ENCODE measurements at regions of chr15 and their contacts with region 1.

Region 1: GRCh38 chr15:75517233-75517632 is 61.9 kb downstream of the PTPN9 start:
- DNase-seq: no peak
- ATAC-seq: no peak
- H3K4me3 ChIP-seq: no peak overlapping the region
- H3K27ac ChIP-seq: no peak overlapping the region
- H3K4me1 ChIP-seq: no peaks in the 10 kb centered on the region
- H3K27me3 ChIP-seq: no peaks in the 10 kb centered on the region
- CTCF ChIP-seq: no peak

Region 2: GRCh38 chr15:75606711-75607699 is 89.8 kb after region 1 on chr15:
- intact Hi-C with region 1: loop called in 2 of 10 experiments (anchors 10 kb)
- DNase-seq: no peak
- ATAC-seq: no peak
- H3K4me3 ChIP-seq: no peak overlapping the region
- H3K27ac ChIP-seq: peak overlapping the region in 1 of 10 donors; percentile 42
- H3K4me1 ChIP-seq: peaks cover 0 to 16% (median 0%) of the 10 kb centered on the region in 9 donors
- H3K27me3 ChIP-seq: no peaks in the 10 kb centered on the region
- CTCF ChIP-seq: no peak

Region 3: GRCh38 chr15:75672646-75673425 is 155.6 kb after region 1 on chr15:
- intact Hi-C with region 1: loop called in 1 of 10 experiments (anchors 10 kb)
- DNase-seq: peak in 1 of 2 donors; percentile 50
- ATAC-seq: peak; percentile 7 to 53 (median 28)
- H3K4me3 ChIP-seq: peak overlapping the region in 1 of 10 donors; percentile 18
- H3K27ac ChIP-seq: peak overlapping the region in 9 of 10 donors; percentile 14 to 81 (median 79)
- H3K4me1 ChIP-seq: peaks cover 20 to 67% (median 37%) of the 10 kb centered on the region in 9 donors
- H3K27me3 ChIP-seq: no peaks in the 10 kb centered on the region
- CTCF ChIP-seq: no peak

Measured in heart right ventricle (tissue), 16 donors.